ENCODE measurements at regions of chr21 and their contacts with region 1.

Region 1: GRCh38 chr21:45091550-45092322 is 17.4 kb downstream of the ADARB1 start:
- DNase-seq: no peak
- ATAC-seq: no peak
- H3K4me3 ChIP-seq: no peak overlapping the region
- H3K4me3 Mint-ChIP-seq: no peak overlapping the region
- H3K27ac ChIP-seq: no peak overlapping the region
- H3K27ac Mint-ChIP-seq: peak overlapping the region in 2 of 9 donors; percentile 24 to 49
- H3K4me1 ChIP-seq: peaks cover 17 to 40% of the 10 kb centered on the region in 2 donors
- H3K4me1 Mint-ChIP-seq: peaks cover 42 to 90% (median 82%) of the 10 kb centered on the region in 7 donors
- H3K27me3 ChIP-seq: no peaks in the 10 kb centered on the region
- H3K27me3 Mint-ChIP-seq: no peaks in the 10 kb centered on the region

Region 2: DNA sequence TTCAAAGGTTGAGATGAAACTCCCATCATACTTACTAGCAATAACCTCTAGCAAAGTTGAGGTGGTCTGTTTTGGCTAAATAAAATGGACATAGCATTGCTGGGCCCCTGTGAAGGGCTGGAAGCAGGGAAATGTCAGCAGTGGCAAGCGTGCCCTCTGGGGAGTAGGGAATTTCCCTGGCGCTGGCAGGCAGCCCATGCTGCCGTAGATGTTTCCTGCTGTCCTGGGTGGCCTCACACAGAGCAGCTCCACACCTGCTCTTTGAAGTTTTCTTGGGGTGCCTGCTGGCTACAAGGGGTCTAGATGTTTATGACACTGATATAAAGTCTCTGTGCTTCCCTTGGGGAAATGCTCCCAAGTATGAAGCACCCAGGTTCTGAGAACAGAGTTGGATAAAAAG is 12.8 kb after region 1 on chr21:
- CTCF ChIA-PET with region 1: no interaction called
- POLR2A ChIA-PET with region 1: interaction called, 3 read pairs
- intact Hi-C with region 1: loop called in 1 of 2 experiments (anchors 2 kb)
- DNase-seq: peak in 1 of 9 donors; percentile 42
- ATAC-seq: peak; percentile 74
- H3K4me3 ChIP-seq: no peak overlapping the region
- H3K4me3 Mint-ChIP-seq: peak overlapping the region; percentile 24 to 70 (median 61)
- H3K27ac ChIP-seq: no peak overlapping the region
- H3K27ac Mint-ChIP-seq: peak overlapping the region; percentile 3 to 84 (median 64)
- H3K4me1 ChIP-seq: peaks cover 12 to 36% of the 10 kb centered on the region in 2 donors
- H3K4me1 Mint-ChIP-seq: peaks cover 41 to 89% (median 65%) of the 10 kb centered on the region in 7 donors
- H3K27me3 ChIP-seq: no peaks in the 10 kb centered on the region
- H3K27me3 Mint-ChIP-seq: no peaks in the 10 kb centered on the region